ENCODE measurements at regions of chr7 and their contacts with region 1.

Region 1: DNA sequence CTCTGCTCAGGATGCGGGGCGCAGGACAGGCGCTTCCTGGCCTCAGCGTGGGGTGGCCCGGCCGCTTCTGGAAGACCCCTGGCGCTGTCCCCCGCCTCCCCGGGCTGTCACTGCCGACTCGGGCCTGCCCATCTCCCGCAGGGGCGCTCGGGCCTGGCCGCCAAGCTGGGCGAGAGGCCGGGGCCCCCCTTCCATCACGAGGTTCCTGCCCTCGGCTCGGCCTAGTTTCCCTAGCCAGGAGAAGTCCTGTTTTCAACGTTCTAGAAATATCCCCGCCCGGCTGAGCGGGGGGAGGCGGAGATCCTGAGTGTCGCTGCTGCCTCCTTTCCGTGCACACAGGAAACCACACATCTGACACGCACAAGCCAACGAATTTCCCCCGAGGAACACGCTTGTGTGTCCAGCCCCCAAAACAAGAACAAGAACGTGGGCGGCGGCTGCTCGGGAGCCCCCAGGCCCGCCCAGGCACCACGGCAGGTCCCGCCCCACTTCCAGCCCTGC is 33.7 kb downstream of the AP5Z1 start:
- DNase-seq: no peak
- H3K4me3 ChIP-seq: no peak overlapping the region
- CTCF ChIP-seq: no peak

Region 2: DNA sequence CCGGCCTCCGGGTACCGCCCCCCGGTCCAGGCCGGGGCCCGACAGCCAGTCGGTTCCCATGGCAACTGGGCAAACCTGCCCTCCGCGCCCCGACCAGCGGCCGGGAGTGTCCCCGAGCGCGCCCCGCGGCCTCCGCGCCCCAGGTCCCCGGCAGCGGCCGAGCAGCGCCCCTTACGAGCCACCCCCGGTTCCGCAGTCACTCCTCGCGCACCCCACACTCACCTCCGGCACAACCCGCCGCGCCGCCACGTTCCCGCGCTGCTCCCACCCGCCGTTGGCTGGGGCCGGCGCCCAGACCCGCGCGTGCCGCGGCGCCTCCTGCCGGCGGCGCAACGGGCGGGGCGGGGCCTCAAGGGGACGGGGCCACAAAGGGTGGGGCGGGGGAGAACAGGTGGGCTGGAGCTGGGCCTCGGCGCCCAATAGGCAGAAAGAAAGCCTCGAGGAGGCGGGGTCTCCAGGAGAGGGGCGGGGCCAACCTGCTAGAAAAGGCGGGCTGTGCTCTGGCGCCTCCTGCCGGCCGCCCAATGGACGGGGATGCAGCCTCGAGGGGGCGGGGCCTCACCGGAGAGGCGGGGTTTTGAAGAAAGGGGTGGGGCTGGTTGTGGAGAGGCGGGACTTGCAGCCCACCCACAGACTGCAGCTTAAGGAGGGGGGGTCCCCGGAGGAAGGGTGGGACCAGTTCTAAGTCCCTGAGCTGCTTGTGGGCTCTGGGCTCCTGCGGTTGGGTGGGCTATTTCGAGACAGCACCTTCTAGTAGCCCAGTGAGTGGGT is 74.4 kb after region 1 on chr7 and contains the start of gene RADIL:
- in situ Hi-C with region 1: no loop called
- DNase-seq: peak; percentile 47
- H3K4me3 ChIP-seq: peak within 1 kb of the TSS; percentile 43
- CTCF ChIP-seq: peak; percentile 70

Region 3: GRCh38 chr7:5077740-5078139 is 268.6 kb after region 1 on chr7:
- in situ Hi-C with region 1: loop called (anchors 25 kb)
- DNase-seq: no peak
- H3K4me3 ChIP-seq: no peak overlapping the region
- CTCF ChIP-seq: no peak